Endothelial cell of umbilical vein (primary cell): ENCODE measurements at regions of chr5 and their contacts with region 1.

Region 1: DNA sequence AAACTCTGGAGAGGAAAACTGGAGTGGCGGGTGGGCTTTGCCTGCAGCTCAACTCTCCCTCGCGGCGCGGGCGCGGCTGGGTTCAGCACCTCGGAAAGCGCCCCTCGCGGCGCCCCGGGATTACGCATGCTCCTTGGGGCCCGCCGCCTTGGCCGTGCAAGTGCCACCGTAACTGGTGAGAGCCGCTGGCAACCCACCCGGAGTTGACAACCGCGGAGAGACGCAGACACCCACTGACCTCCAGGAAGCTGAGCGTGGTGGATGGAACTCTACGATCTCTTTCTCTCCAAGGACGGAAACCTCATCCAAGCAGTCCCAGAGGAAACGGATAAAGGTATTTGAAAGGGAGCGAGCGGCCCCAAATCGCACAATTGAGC is 194 bp upstream of the RXFP3 start:
- DNase-seq: peak; percentile 46
- H3K4me3 ChIP-seq: peak overlapping the region in 1 of 3 experiments; percentile 3
- H3K27ac ChIP-seq: no peak overlapping the region
- H3K4me1 ChIP-seq: peaks cover 14% of the 10 kb centered on the region
- H3K27me3 ChIP-seq: peaks cover 40 to 49% of the 10 kb centered on the region in 2 experiments
- CTCF ChIP-seq: peak in 1 of 2 donors; percentile 17
- POLR2A ChIP-seq: no peak

Region 2: GRCh38 chr5:33433303-33434240 is 502.4 kb before region 1 on chr5:
- CTCF ChIA-PET with region 1: interaction called, 80 read pairs
- POLR2A ChIA-PET with region 1: no interaction called
- dilution Hi-C with region 1: no loop called
- intact Hi-C with region 1: no loop called
- DNase-seq: no peak
- H3K4me3 ChIP-seq: no peak overlapping the region
- H3K27ac ChIP-seq: no peak overlapping the region
- H3K4me1 ChIP-seq: no peaks in the 10 kb centered on the region
- H3K27me3 ChIP-seq: no peaks in the 10 kb centered on the region
- CTCF ChIP-seq: no peak
- POLR2A ChIP-seq: no peak

Region 3: GRCh38 chr5:33491941-33492340 is 444.1 kb before region 1 on chr5:
- CTCF ChIA-PET with region 1: interaction called, 11 read pairs
- POLR2A ChIA-PET with region 1: no interaction called
- dilution Hi-C with region 1: no loop called
- intact Hi-C with region 1: no loop called
- DNase-seq: no peak
- H3K4me3 ChIP-seq: no peak overlapping the region
- H3K27ac ChIP-seq: no peak overlapping the region
- H3K4me1 ChIP-seq: peaks cover 2% of the 10 kb centered on the region
- H3K27me3 ChIP-seq: peaks cover 0 to 3% of the 10 kb centered on the region in 2 experiments
- CTCF ChIP-seq: no peak
- POLR2A ChIP-seq: no peak

Region 4: GRCh38 chr5:33588654-33589372 is 347.2 kb before region 1 on chr5:
- CTCF ChIA-PET with region 1: interaction called, 345 read pairs
- POLR2A ChIA-PET with region 1: no interaction called
- dilution Hi-C with region 1: no loop called
- intact Hi-C with region 1: no loop called
- DNase-seq: peak; percentile 23
- H3K4me3 ChIP-seq: no peak overlapping the region
- H3K27ac ChIP-seq: no peak overlapping the region
- H3K4me1 ChIP-seq: no peaks in the 10 kb centered on the region
- H3K27me3 ChIP-seq: no peaks in the 10 kb centered on the region
- CTCF ChIP-seq: peak; percentile 67 to 89
- POLR2A ChIP-seq: no peak

Region 5: DNA sequence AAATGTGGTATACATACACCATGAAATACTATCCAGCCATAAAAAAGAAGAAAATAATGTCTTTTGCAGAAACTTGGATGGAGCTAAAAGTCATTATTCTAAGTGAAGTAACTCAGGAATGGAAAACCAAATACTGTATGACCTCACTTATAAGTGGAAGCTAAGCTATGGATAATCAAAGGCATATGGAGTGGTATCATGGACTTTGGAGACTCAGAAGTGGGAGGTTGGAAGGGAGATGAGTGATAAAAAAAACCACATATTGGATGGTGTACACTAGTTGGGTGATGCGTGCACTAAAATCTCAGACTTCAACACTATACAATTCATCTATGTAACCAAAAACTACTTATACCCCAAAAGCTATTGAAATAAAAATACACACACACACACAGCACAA is 68.8 kb before region 1 on chr5:
- CTCF ChIA-PET with region 1: no interaction called
- POLR2A ChIA-PET with region 1: no interaction called
- dilution Hi-C with region 1: no loop called
- intact Hi-C with region 1: no loop called
- DNase-seq: no peak
- H3K4me3 ChIP-seq: no peak overlapping the region
- H3K27ac ChIP-seq: no peak overlapping the region
- H3K4me1 ChIP-seq: no peaks in the 10 kb centered on the region
- H3K27me3 ChIP-seq: no peaks in the 10 kb centered on the region
- CTCF ChIP-seq: no peak
- POLR2A ChIP-seq: no peak

Region 6: GRCh38 chr5:33969572-33970452 is 33.8 kb after region 1 on chr5:
- CTCF ChIA-PET with region 1: interaction called, 19 read pairs
- POLR2A ChIA-PET with region 1: no interaction called
- dilution Hi-C with region 1: no loop called
- intact Hi-C with region 1: no loop called
- DNase-seq: peak; percentile 47
- H3K4me3 ChIP-seq: no peak overlapping the region
- H3K27ac ChIP-seq: no peak overlapping the region
- H3K4me1 ChIP-seq: no peaks in the 10 kb centered on the region
- H3K27me3 ChIP-seq: peaks cover 2 to 3% of the 10 kb centered on the region in 2 experiments
- CTCF ChIP-seq: peak; percentile 64 to 65
- POLR2A ChIP-seq: no peak